Activated CD4-positive, alpha-beta T cell treated with anti-CD3 and anti-CD28 coated beads for 36 hours (primary cell): ENCODE measurements at regions of chr3 and their contacts with region 1.

Region 1: GRCh38 chr3:132730891-132731580 is 8.8 kb upstream of the NPHP3 start:
- DNase-seq: no peak
- ATAC-seq: peak; percentile 58
- H3K4me3 Mint-ChIP-seq: no peak overlapping the region
- H3K27ac Mint-ChIP-seq: no peak overlapping the region
- H3K4me1 Mint-ChIP-seq: no peaks in the 10 kb centered on the region
- H3K27me3 Mint-ChIP-seq: peaks cover 18% of the 10 kb centered on the region

Region 2: DNA sequence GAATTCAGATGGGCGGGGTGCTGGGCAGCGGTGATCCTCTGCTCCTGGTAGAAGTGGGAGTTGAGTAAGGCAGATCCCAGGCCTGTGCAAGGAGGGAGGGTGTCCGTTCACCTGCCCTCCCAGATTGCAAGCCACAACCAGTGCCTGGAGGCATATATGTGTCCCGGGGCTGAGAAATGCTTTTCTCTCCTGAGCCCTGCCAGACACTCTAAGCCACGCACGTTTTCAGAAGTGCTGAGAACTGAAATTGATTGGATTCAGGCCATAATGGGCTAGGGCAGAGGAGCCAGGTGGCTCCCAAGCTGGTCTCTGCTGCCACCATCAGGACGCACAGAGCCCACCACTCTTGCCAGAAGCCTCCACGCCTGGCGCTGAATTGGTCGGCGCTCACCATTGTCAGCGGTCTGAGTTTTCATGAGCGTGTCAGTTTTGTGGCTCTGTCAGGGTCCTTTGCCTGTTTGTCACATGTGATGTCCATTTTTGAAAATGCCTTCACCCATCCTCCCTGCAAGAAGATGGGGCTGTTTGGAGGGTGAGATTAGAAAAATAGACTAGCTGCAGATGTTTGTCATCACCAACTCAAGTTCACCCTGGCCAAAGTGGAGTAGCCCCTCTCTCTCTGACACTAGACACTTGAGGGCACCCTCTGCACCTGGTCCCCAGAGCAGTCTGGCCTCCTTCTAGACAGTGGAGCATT is 653.4 kb after region 1 on chr3:
- CTCF ChIA-PET with region 1: interaction called, 10 read pairs
- POLR2A ChIA-PET with region 1: no interaction called
- intact Hi-C with region 1: loop called (anchors 1 to 2 kb)
- DNase-seq: peak; percentile 71
- ATAC-seq: peak; percentile 83
- H3K4me3 Mint-ChIP-seq: no peak overlapping the region
- H3K27ac Mint-ChIP-seq: no peak overlapping the region
- H3K4me1 Mint-ChIP-seq: no peaks in the 10 kb centered on the region
- H3K27me3 Mint-ChIP-seq: peaks cover 3% of the 10 kb centered on the region

Region 3: GRCh38 chr3:133426721-133427120 is 695.7 kb after region 1 on chr3:
- CTCF ChIA-PET with region 1: interaction called, 16 read pairs
- POLR2A ChIA-PET with region 1: no interaction called
- intact Hi-C with region 1: loop called (anchors 1 kb)
- DNase-seq: no peak
- ATAC-seq: peak; percentile 68
- H3K4me3 Mint-ChIP-seq: no peak overlapping the region
- H3K27ac Mint-ChIP-seq: no peak overlapping the region
- H3K4me1 Mint-ChIP-seq: peaks cover 6% of the 10 kb centered on the region
- H3K27me3 Mint-ChIP-seq: no peaks in the 10 kb centered on the region